Naive thymus-derived CD8-positive, alpha-beta T cell (primary cell): ENCODE measurements at regions of chr14 and their contacts with region 1.

Region 1: GRCh38 chr14:93115069-93115820 is 480 bp downstream of the ITPK1 start:
- DNase-seq: peak; percentile 66 to 89 (median 81)
- ATAC-seq: peak; percentile 77 to 82
- H3K4me3 Mint-ChIP-seq: peak overlapping the region; percentile 75 to 95 (median 86)
- H3K27ac Mint-ChIP-seq: peak overlapping the region in 7 of 10 donors; percentile 24 to 92 (median 84)
- H3K4me1 Mint-ChIP-seq: peaks cover 16 to 45% (median 36%) of the 10 kb centered on the region in 4 donors
- H3K27me3 Mint-ChIP-seq: no peaks in the 10 kb centered on the region

Region 2: DNA sequence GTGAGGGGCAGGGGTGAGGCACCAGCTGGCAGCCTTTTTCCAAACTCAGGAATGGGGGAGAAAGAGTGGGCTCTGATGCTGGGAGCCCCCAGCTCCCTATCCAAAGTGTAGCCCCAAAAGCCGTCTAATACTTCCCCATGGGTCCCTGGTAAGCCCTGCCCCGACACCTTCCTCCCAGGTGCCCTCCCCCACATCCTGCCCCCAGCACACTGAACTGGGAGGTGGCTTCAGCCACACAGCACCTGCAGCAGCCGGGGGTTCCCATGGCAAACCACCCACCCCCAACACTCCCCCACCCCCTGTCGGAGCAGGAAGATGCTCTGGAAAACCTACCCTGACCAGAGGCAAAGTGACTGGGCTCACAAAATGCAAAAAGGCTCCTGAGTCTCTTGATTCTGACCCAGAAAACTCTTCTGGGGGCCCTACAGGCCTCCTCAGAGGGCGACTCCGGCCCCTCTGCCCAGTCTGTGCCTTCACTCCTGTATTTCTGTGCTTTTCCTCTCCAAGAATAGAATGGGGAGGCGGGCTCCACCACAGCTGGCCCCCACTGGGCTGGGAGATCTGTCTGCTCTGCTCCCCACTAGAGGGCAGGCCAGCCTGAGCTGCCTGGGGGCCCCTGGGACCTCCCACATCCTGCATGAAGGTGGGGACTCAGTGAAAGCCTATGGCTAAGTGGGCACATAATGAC is 81.1 kb before region 1 on chr14:
- POLR2A ChIA-PET with region 1: interaction called, 18 read pairs
- DNase-seq: peak; percentile 35 to 83 (median 66)
- ATAC-seq: peak; percentile 90 to 91
- H3K4me3 Mint-ChIP-seq: peak overlapping the region; percentile 67 to 90 (median 80)
- H3K27ac Mint-ChIP-seq: peak overlapping the region; percentile 86 to 95 (median 92)
- H3K4me1 Mint-ChIP-seq: peaks cover 28 to 59% (median 57%) of the 10 kb centered on the region in 4 donors
- H3K27me3 Mint-ChIP-seq: no peaks in the 10 kb centered on the region

Region 3: GRCh38 chr14:93059917-93060545 is 55.2 kb before region 1 on chr14:
- POLR2A ChIA-PET with region 1: interaction called, 29 read pairs
- DNase-seq: peak in 9 of 10 donors; percentile 22 to 76 (median 46)
- ATAC-seq: peak; percentile 89 to 91
- H3K4me3 Mint-ChIP-seq: peak overlapping the region; percentile 48 to 88 (median 78)
- H3K27ac Mint-ChIP-seq: peak overlapping the region; percentile 88 to 96 (median 94)
- H3K4me1 Mint-ChIP-seq: peaks cover 47 to 81% (median 76%) of the 10 kb centered on the region in 4 donors
- H3K27me3 Mint-ChIP-seq: no peaks in the 10 kb centered on the region

Region 4: GRCh38 chr14:93081876-93082570 is 33.2 kb before region 1 on chr14:
- POLR2A ChIA-PET with region 1: interaction called, 30 read pairs
- DNase-seq: peak in 9 of 10 donors; percentile 29 to 81 (median 67)
- ATAC-seq: peak; percentile 82 to 90
- H3K4me3 Mint-ChIP-seq: peak overlapping the region; percentile 41 to 85 (median 74)
- H3K27ac Mint-ChIP-seq: peak overlapping the region; percentile 90 to 99 (median 96)
- H3K4me1 Mint-ChIP-seq: peaks cover 34 to 93% (median 90%) of the 10 kb centered on the region in 4 donors
- H3K27me3 Mint-ChIP-seq: no peaks in the 10 kb centered on the region

Region 5: GRCh38 chr14:93103392-93104080 is 11.7 kb before region 1 on chr14:
- POLR2A ChIA-PET with region 1: interaction called, 50 read pairs
- DNase-seq: peak; percentile 39 to 81 (median 55)
- ATAC-seq: peak; percentile 94 to 98
- H3K4me3 Mint-ChIP-seq: peak overlapping the region; percentile 71 to 93 (median 86)
- H3K27ac Mint-ChIP-seq: peak overlapping the region; percentile 90 to 97 (median 96)
- H3K4me1 Mint-ChIP-seq: peaks cover 20 to 74% (median 58%) of the 10 kb centered on the region in 4 donors
- H3K27me3 Mint-ChIP-seq: no peaks in the 10 kb centered on the region

Region 6: DNA sequence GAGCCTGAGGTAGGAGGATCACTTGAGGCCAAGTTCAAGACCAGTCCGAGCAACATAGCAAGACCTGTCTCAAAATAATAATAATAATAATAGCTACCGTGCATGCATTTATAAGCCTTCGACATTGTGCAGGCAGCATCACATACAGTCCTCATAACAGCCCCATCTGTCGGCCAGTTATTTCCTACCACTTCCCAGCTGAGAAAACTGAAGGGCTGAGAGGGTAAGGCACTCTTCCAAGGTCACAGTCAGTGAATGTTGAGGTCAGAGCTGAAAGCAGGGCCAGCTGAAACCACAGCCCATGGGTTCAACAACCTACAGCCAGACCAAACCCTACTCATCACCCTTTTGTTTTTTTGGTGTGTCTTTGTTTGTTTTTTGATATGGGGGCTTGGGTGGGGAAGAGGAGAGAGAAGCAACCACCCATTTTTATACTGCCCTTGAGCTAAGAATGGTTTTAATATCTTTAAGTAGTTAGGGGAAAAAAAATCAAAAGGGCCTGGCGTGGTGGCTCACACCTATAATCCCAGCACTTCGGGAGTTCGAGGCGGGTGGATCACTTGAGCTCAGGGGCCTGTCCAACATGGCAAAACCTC is 17.3 kb after region 1 on chr14:
- POLR2A ChIA-PET with region 1: interaction called, 14 read pairs
- DNase-seq: peak in 7 of 10 donors; percentile 24 to 66 (median 34)
- ATAC-seq: peak; percentile 74 to 79
- H3K4me3 Mint-ChIP-seq: no peak overlapping the region
- H3K27ac Mint-ChIP-seq: peak overlapping the region in 2 of 10 donors; percentile 4 to 69
- H3K4me1 Mint-ChIP-seq: peaks cover 0 to 4% (median 1%) of the 10 kb centered on the region in 4 donors
- H3K27me3 Mint-ChIP-seq: no peaks in the 10 kb centered on the region

Region 7: DNA sequence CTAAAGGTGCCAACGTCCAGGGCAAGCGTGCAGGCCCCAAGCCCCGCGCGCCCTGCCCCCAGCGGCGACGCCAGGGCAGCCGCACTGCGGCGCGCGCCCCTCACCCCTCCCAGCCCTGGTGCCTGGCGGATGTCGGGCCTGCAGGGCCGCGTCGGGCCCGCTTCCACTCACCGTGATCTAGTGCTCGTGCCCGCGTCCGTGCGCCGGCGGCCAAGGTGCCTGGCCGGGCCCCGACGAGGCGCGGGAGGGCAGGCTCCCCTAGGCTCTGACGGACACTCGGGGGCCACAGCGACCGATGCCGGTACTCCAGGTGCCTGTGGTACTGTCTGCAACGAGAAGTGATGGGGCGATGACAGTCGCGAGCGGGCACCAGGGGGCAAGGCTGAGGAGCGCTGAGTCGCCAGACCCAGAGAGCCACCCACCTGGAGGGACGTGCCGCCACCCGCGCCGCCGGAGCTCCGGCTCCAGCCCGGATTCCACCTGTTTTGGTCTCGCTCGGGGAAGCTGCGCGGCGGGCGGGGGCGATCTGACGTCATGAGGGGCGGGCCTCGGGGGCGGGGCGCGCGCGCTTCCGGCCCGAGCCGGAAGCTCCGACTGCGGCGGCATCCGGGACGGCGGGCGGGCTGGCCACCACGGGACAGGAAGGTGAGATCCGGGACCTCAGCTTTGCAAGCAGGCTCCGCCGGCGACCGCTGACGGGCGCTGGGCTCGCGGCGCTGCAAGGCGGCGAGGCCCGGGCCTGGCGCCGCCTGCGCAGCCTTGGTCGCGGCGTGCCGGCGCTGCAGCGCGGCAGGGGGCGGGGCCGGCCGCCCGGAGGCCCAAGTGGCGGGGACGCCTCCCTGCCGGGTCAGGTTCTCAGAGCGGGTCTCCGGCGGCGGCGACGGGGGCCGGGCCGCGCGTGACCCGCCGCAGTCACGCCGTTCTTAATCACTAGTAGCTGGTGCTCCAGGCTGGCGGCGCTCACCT is 69.4 kb after region 1 on chr14 and contains the starts of genes LYSET and MOAP1:
- POLR2A ChIA-PET with region 1: interaction called, 19 read pairs
- DNase-seq: peak; percentile 90 to 96 (median 91)
- ATAC-seq: peak; percentile 90 to 92
- H3K4me3 Mint-ChIP-seq: peak within 1 kb of the TSS; percentile 90 to 98 (median 95)
- H3K27ac Mint-ChIP-seq: peak within 1 kb of the TSS; percentile 93 to 99 (median 98)
- H3K4me1 Mint-ChIP-seq: peaks cover 17 to 49% (median 40%) of the 10 kb centered on the region in 4 donors
- H3K27me3 Mint-ChIP-seq: no peaks in the 10 kb centered on the region
- polyA plus RNA-seq, gene LYSET: 33.8 to 46.0 (median 42.1) TPM
- polyA plus RNA-seq, gene MOAP1: 56.8 to 75.0 (median 72.2) TPM